ENCODE measurements at regions of chr7 and their contacts with region 1.

Region 1: DNA sequence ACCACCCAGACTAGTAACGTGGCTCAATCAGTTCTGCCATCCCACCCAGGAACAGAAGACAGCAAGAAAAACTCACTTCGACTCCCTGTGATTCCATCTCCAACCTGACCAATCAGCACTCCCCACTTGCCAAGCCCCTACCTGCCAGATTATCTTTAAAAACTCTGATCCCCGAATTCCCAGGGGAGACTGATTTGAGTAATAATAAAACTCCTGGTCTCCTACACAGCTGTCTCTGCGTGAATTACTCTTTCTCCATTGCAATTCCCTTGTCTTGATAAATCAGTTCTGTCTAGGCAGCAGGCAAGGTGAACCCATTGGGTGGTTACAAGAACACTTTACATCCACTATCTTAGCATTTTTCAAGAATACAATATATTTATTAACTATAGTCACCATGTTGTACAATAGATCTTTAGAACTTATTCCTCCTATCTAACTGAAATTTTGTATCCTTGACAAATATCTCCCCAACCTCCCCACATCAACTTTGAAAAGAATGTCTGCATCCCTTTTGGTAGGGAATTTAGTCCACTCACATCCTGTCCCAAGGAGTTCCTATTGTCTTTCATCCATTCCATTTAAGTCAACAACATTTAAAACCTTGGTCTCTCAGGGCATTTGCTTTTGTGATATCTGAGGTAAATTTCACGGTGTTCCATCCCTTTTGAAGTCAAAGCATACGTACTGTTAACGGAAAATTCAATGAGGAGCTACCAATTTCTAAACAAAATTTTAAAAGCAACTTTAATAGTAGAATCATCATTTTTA is 163.7 kb downstream of the MACC1 start:
- DNase-seq: no peak
- H3K4me3 ChIP-seq: no peak overlapping the region
- H3K4me3 Mint-ChIP-seq: no peak overlapping the region
- H3K27ac Mint-ChIP-seq: peak overlapping the region; percentile 74
- H3K4me1 ChIP-seq: peaks cover 36% of the 10 kb centered on the region
- H3K4me1 Mint-ChIP-seq: peaks cover 28% of the 10 kb centered on the region
- H3K27me3 ChIP-seq: no peaks in the 10 kb centered on the region
- H3K27me3 Mint-ChIP-seq: no peaks in the 10 kb centered on the region
- CTCF ChIP-seq: no peak

Region 2: GRCh38 chr7:18610331-18610948 is 1443.1 kb before region 1 on chr7:
- CTCF ChIA-PET with region 1: no interaction called
- POLR2A ChIA-PET with region 1: no interaction called
- intact Hi-C with region 1: no loop called
- DNase-seq: peak in 1 of 2 experiments; percentile 34
- H3K4me3 ChIP-seq: no peak overlapping the region
- H3K4me3 Mint-ChIP-seq: no peak overlapping the region
- H3K27ac Mint-ChIP-seq: no peak overlapping the region
- H3K4me1 ChIP-seq: no peaks in the 10 kb centered on the region
- H3K4me1 Mint-ChIP-seq: no peaks in the 10 kb centered on the region
- H3K27me3 ChIP-seq: no peaks in the 10 kb centered on the region
- H3K27me3 Mint-ChIP-seq: no peaks in the 10 kb centered on the region
- CTCF ChIP-seq: peak; percentile 62 to 66

Region 3: DNA sequence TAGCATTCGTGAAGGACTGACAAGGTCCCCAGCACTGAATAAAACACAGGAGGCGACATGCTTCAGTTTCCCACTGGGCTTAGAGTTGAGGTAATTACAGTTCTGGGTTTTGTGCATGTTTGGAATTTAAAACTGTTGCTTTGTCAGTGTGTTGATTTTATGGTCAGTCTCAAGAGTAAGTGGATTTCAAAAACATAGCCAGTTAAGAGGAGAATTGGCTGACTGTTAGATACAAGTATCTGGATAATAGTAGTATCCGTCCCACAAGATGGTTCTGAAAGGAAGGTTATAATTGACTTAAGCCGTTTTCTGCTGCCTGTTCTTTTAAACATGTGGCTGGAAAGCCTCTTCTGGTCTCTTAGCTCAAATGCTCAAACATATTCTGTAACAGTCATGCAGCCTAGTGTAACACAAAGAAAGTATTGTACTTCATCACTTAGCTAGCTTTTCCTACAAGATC is 515.5 kb before region 1 on chr7:
- CTCF ChIA-PET with region 1: no interaction called
- POLR2A ChIA-PET with region 1: no interaction called
- intact Hi-C with region 1: no loop called
- DNase-seq: no peak
- H3K4me3 ChIP-seq: no peak overlapping the region
- H3K4me3 Mint-ChIP-seq: no peak overlapping the region
- H3K27ac Mint-ChIP-seq: no peak overlapping the region
- H3K4me1 ChIP-seq: no peaks in the 10 kb centered on the region
- H3K4me1 Mint-ChIP-seq: no peaks in the 10 kb centered on the region
- H3K27me3 ChIP-seq: no peaks in the 10 kb centered on the region
- H3K27me3 Mint-ChIP-seq: peaks cover 5% of the 10 kb centered on the region
- CTCF ChIP-seq: no peak

Region 4: DNA sequence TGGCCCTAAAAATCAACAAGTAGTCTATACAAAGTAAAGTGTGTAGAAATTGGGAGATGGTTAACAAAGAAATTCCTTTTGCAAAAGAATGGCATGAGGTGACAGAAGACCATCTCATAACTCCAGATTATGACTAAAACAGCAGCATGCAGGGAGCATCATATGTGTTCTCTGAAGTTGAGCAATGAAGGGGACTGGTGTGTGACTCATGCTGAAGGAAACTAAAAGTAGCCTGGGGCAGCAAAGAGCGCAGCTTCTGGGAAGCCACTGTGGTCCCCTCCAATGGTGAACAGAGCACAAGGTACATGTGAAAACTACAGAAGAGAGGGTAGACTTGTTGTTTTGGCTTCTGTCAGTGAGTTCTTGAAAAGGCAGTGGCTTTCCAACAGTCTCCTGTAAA is 30.3 kb after region 1 on chr7:
- CTCF ChIA-PET with region 1: no interaction called
- POLR2A ChIA-PET with region 1: no interaction called
- intact Hi-C with region 1: loop called (anchors 2 kb)
- DNase-seq: peak; percentile 34 to 64
- H3K4me3 ChIP-seq: no peak overlapping the region
- H3K4me3 Mint-ChIP-seq: no peak overlapping the region
- H3K27ac Mint-ChIP-seq: peak overlapping the region; percentile 74
- H3K4me1 ChIP-seq: peaks cover 36% of the 10 kb centered on the region
- H3K4me1 Mint-ChIP-seq: peaks cover 34% of the 10 kb centered on the region
- H3K27me3 ChIP-seq: no peaks in the 10 kb centered on the region
- H3K27me3 Mint-ChIP-seq: no peaks in the 10 kb centered on the region
- CTCF ChIP-seq: no peak

Region 5: DNA sequence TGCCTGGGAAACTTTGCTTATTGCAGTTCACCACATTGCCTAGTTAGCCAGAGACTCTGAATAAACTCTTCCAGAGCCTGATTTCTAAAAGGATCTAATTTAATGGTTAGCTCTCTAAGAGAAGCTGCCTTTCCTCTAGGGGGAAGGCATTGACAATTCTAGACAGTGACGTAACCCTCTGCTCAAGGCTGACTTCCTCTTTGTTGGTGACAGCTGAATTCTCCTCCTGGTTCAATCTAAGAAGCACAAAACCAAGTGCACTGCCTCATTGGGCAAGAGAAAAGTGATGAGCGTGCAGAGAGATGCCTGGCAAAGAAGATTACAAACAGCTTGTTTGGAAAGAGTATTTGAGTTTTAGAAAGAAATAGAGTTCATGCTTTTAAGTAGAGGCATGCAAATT is 60.9 kb after region 1 on chr7:
- CTCF ChIA-PET with region 1: no interaction called
- POLR2A ChIA-PET with region 1: no interaction called
- intact Hi-C with region 1: loop called (anchors 2 kb)
- DNase-seq: no peak
- H3K4me3 ChIP-seq: no peak overlapping the region
- H3K4me3 Mint-ChIP-seq: no peak overlapping the region
- H3K27ac Mint-ChIP-seq: no peak overlapping the region
- H3K4me1 ChIP-seq: peaks cover 22% of the 10 kb centered on the region
- H3K4me1 Mint-ChIP-seq: peaks cover 5% of the 10 kb centered on the region
- H3K27me3 ChIP-seq: no peaks in the 10 kb centered on the region
- H3K27me3 Mint-ChIP-seq: no peaks in the 10 kb centered on the region
- CTCF ChIP-seq: no peak

Region 6: GRCh38 chr7:20132631-20133030 is 79.1 kb after region 1 on chr7:
- CTCF ChIA-PET with region 1: no interaction called
- POLR2A ChIA-PET with region 1: no interaction called
- intact Hi-C with region 1: loop called (anchors 5 kb)
- DNase-seq: no peak
- H3K4me3 ChIP-seq: no peak overlapping the region
- H3K4me3 Mint-ChIP-seq: no peak overlapping the region
- H3K27ac Mint-ChIP-seq: peak overlapping the region; percentile 29
- H3K4me1 ChIP-seq: peaks cover 13% of the 10 kb centered on the region
- H3K4me1 Mint-ChIP-seq: peaks cover 15% of the 10 kb centered on the region
- H3K27me3 ChIP-seq: no peaks in the 10 kb centered on the region
- H3K27me3 Mint-ChIP-seq: no peaks in the 10 kb centered on the region
- CTCF ChIP-seq: no peak

Region 7: DNA sequence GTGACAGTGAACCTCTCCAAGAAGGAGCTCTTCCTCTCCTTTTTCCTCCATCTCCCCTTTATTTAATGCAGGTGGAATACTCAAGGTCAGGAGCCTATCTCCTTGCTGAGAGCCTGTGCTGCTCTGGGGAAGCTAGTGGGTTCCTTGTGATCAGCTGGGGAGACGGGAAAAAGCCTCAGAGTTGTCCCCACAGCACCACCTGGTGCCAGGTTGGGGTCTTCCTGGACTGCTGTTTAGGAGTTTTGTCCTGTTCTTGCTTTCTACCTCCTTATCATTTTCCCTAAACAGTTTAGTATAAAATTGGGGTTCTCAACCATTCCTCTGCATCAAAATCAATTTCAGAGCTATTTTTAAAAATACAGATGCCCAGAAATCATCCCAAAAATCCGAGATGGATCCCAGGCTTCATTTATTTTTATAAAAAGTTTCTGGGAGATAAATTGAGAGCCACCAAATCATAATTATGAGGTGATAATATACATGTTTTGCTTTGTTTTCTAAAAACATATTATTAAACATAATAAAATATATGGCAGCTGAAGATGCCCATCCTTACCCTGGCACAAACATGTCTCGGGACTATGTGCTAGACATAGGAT is 119.3 kb after region 1 on chr7:
- CTCF ChIA-PET with region 1: no interaction called
- POLR2A ChIA-PET with region 1: no interaction called
- intact Hi-C with region 1: loop called (anchors 1 kb)
- DNase-seq: peak; percentile 78 to 82
- H3K4me3 ChIP-seq: no peak overlapping the region
- H3K4me3 Mint-ChIP-seq: no peak overlapping the region
- H3K27ac Mint-ChIP-seq: no peak overlapping the region
- H3K4me1 ChIP-seq: peaks cover 6% of the 10 kb centered on the region
- H3K4me1 Mint-ChIP-seq: peaks cover 21% of the 10 kb centered on the region
- H3K27me3 ChIP-seq: no peaks in the 10 kb centered on the region
- H3K27me3 Mint-ChIP-seq: no peaks in the 10 kb centered on the region
- CTCF ChIP-seq: peak; percentile 69 to 88

Region 8: DNA sequence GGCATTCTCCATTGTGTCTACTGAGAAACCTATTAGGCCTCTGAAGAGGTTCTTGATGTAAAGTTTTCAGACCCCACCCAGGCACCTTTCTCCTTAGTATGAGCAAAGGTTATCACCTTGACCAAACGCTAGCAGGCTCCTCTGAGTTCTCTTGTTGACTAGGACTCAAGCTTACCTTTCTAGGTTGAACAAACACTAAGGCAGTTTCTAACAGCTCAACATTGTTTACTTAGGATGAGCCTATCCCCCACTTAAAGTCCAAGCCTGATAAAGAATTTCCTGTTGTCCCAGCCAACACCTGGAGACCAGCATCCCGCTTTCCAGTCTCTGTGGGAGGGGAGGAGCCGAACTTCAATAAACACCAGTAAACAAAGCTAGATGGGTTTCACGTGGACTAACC is 250.9 kb after region 1 on chr7:
- CTCF ChIA-PET with region 1: no interaction called
- POLR2A ChIA-PET with region 1: no interaction called
- intact Hi-C with region 1: loop called (anchors 1 kb)
- DNase-seq: peak; percentile 70 to 87
- H3K4me3 ChIP-seq: no peak overlapping the region
- H3K4me3 Mint-ChIP-seq: no peak overlapping the region
- H3K27ac Mint-ChIP-seq: peak overlapping the region; percentile 35
- H3K4me1 ChIP-seq: peaks cover 40% of the 10 kb centered on the region
- H3K4me1 Mint-ChIP-seq: peaks cover 45% of the 10 kb centered on the region
- H3K27me3 ChIP-seq: no peaks in the 10 kb centered on the region
- H3K27me3 Mint-ChIP-seq: no peaks in the 10 kb centered on the region
- CTCF ChIP-seq: peak in 1 of 2 experiments; percentile 10

Region 9: GRCh38 chr7:20508109-20508508 is 454.6 kb after region 1 on chr7:
- CTCF ChIA-PET with region 1: no interaction called
- POLR2A ChIA-PET with region 1: no interaction called
- intact Hi-C with region 1: no loop called
- DNase-seq: no peak
- H3K4me3 ChIP-seq: no peak overlapping the region
- H3K4me3 Mint-ChIP-seq: no peak overlapping the region
- H3K27ac Mint-ChIP-seq: no peak overlapping the region
- H3K4me1 ChIP-seq: no peaks in the 10 kb centered on the region
- H3K4me1 Mint-ChIP-seq: peaks cover 6% of the 10 kb centered on the region
- H3K27me3 ChIP-seq: no peaks in the 10 kb centered on the region
- H3K27me3 Mint-ChIP-seq: peaks cover 2% of the 10 kb centered on the region
- CTCF ChIP-seq: no peak

Region 10: GRCh38 chr7:20737840-20738448 is 684.4 kb after region 1 on chr7:
- CTCF ChIA-PET with region 1: no interaction called
- POLR2A ChIA-PET with region 1: no interaction called
- intact Hi-C with region 1: loop called (anchors 2 kb)
- DNase-seq: peak; percentile 63 to 78
- H3K4me3 ChIP-seq: no peak overlapping the region
- H3K4me3 Mint-ChIP-seq: peak overlapping the region; percentile 79
- H3K27ac Mint-ChIP-seq: peak overlapping the region; percentile 90
- H3K4me1 ChIP-seq: peaks cover 65% of the 10 kb centered on the region
- H3K4me1 Mint-ChIP-seq: peaks cover 53% of the 10 kb centered on the region
- H3K27me3 ChIP-seq: no peaks in the 10 kb centered on the region
- H3K27me3 Mint-ChIP-seq: no peaks in the 10 kb centered on the region
- CTCF ChIP-seq: no peak